ENCODE measurements at regions of chr4 and their contacts with region 1.

Region 1: GRCh38 chr4:40056716-40057585 is at the start of gene N4BP2:
- DNase-seq: peak; percentile 71
- H3K4me3 Mint-ChIP-seq: peak within 1 kb of the TSS; percentile 93
- H3K27ac Mint-ChIP-seq: peak within 1 kb of the TSS; percentile 95
- H3K4me1 Mint-ChIP-seq: peaks cover 30% of the 10 kb centered on the region
- H3K27me3 Mint-ChIP-seq: no peaks in the 10 kb centered on the region
- total RNA-seq, gene N4BP2: 17.5 to 18.8 TPM

Region 2: DNA sequence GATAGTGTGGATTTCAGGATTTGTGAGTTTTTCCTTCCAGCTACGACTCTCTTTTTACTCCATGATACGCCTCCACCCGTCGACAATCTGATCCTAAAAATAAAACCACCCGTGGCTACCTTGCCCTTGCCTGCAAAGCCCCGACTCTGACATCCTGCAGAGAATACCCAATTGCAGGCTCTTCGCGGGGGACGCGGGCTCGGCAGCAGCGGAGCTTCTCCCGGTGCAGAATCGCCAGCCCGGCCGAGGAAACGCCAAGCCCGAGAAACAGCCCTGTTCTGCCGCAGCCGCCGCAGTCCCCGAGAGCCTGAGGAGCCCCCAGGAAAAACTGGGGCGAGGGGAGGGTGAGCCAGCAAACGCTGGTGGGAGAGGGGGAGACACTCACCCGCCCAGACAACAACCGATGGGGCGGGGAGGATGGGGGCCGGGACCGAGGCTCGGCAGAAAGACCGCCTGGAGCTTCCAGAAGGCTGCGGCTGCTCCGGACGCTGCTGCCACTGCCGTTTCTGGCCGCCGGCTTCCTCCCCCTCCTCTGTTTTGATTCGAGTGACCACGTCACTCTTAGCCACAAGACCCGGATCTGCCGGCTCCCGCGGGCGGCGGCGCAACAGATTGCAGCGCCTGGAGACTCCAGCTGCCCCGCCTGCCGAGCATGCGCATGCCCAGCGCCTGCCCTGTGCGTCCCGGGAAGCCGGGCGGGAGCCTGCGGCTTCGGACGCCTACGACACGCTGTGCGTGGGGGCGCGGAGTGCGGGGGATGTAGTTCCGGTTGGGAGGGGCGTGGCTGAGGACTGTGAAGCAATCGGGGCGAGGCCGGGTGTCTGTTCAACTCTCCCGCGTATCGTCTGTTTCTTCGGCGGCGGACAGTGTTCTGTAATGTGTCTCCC is 418.4 kb before region 1 on chr4 and contains the start of gene SMIM14:
- CTCF ChIA-PET with region 1: no interaction called
- intact Hi-C with region 1: loop called (anchors 5 kb)
- DNase-seq: peak; percentile 93
- H3K4me3 Mint-ChIP-seq: peak within 1 kb of the TSS; percentile 85
- H3K27ac Mint-ChIP-seq: peak within 1 kb of the TSS; percentile 69
- H3K4me1 Mint-ChIP-seq: peaks cover 24% of the 10 kb centered on the region
- H3K27me3 Mint-ChIP-seq: no peaks in the 10 kb centered on the region
- total RNA-seq, gene SMIM14: 2.7 to 3.9 TPM

Region 3: DNA sequence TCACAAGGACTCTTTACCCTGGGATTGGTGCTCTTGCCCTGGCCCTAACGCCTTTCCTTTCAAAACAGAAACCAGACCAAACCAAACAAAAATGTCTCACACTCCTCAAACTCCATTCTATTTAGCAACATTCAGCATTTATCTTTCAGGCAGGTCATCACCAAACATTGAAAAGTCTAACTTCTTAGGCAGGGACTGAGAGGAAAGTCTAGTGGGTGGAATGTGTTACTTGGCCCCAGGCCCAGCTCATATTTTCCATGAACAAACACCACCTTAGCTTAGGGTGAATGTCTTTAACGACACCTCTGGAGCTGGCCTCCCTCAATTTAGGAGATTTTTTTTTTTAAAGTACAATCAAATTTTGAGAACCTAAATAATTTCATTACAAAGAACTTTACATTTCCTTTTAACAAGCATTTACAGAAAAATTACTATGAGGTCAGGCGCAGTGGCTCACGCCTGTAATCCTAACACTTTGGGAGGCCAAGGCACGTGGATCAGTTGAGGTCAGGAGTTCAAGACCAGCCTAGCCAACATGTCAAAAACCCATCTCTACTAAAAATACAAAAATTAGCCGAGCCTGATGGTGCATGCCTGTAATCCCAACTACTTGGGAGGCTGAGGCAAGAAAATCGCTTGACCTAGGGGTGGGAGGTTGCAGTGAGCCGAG is 10.5 kb before region 1 on chr4:
- CTCF ChIA-PET with region 1: interaction called, 9 read pairs
- intact Hi-C with region 1: loop called (anchors 1 kb)
- DNase-seq: peak; percentile 60
- H3K4me3 Mint-ChIP-seq: no peak overlapping the region
- H3K27ac Mint-ChIP-seq: peak overlapping the region; percentile 60
- H3K4me1 Mint-ChIP-seq: peaks cover 9% of the 10 kb centered on the region
- H3K27me3 Mint-ChIP-seq: no peaks in the 10 kb centered on the region

Region 4: GRCh38 chr4:40316782-40317635 is 260.1 kb after region 1 on chr4:
- CTCF ChIA-PET with region 1: interaction called, 6 read pairs
- intact Hi-C with region 1: loop called (anchors 2 kb)
- DNase-seq: peak; percentile 71
- H3K4me3 Mint-ChIP-seq: peak overlapping the region; percentile 86
- H3K27ac Mint-ChIP-seq: peak overlapping the region; percentile 100
- H3K4me1 Mint-ChIP-seq: peaks cover 49% of the 10 kb centered on the region
- H3K27me3 Mint-ChIP-seq: no peaks in the 10 kb centered on the region

Region 5: DNA sequence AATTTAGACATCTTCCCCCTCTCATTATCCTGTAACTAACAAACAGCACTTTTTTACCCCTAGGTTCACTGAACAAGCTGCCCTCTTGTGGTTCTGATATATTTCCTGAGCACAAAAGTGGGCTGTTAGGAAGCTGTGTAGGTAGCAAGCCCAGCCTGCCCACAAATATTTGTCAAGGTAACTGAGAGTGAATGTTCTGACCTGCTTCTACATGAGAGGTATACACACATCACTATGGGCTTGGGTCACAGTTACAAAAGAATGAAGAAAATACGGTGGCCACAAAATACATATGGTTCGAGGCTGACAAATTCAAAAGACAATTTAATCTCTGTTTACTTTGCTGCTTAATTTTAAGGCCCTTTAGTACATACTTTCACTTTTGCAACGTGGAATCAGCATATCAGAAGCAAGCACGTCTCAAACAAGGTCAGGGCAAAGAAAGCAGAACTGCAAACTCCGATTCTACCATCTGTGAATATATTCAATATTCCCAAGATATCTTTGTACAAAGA is 494.1 kb after region 1 on chr4:
- CTCF ChIA-PET with region 1: no interaction called
- intact Hi-C with region 1: loop called (anchors 2 kb)
- DNase-seq: peak; percentile 34
- H3K4me3 Mint-ChIP-seq: peak overlapping the region; percentile 60
- H3K27ac Mint-ChIP-seq: peak overlapping the region; percentile 55
- H3K4me1 Mint-ChIP-seq: peaks cover 28% of the 10 kb centered on the region
- H3K27me3 Mint-ChIP-seq: no peaks in the 10 kb centered on the region

Region 6: DNA sequence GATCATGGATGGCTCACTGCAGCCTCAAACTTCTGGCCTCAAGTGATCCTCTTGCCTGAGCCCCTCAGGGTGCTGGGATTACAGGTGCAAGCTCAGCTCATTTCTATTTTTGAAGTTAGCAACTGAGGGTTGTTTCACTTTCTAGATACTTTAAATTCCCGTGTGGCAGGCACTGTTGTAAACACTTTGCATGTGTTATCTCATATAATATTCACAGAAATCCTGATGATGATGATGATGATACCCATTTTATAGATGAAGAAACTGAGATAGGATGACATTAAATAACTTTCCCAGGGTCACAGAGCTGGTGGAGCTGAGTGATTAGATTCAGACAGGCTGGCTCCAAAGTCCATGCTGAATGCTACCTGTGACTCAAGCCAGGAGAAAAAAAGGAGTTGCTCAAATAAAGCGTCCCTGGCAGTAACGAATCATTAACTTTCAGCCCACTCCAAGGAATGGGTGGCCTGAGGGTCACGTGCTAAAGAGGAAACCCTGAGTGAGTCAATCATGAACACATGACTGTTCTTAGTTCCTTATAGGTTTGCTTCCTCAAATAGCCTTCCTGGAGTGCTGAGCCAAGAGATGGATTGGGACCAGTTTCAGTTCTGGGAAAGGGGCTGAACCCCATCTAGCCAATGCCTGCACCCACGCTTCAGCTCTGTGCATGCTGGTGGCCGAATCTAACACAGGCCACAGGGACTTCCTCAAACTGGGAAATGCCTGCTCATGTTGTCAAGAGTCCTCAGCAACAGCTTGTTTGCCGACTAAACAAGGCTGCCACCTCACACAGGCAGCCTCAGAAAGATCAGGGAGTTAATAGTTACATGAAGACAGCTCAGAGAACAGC is 519.9 kb after region 1 on chr4:
- CTCF ChIA-PET with region 1: no interaction called
- intact Hi-C with region 1: no loop called
- DNase-seq: peak; percentile 22
- H3K4me3 Mint-ChIP-seq: no peak overlapping the region
- H3K27ac Mint-ChIP-seq: no peak overlapping the region
- H3K4me1 Mint-ChIP-seq: peaks cover 18% of the 10 kb centered on the region
- H3K27me3 Mint-ChIP-seq: no peaks in the 10 kb centered on the region

Region 7: DNA sequence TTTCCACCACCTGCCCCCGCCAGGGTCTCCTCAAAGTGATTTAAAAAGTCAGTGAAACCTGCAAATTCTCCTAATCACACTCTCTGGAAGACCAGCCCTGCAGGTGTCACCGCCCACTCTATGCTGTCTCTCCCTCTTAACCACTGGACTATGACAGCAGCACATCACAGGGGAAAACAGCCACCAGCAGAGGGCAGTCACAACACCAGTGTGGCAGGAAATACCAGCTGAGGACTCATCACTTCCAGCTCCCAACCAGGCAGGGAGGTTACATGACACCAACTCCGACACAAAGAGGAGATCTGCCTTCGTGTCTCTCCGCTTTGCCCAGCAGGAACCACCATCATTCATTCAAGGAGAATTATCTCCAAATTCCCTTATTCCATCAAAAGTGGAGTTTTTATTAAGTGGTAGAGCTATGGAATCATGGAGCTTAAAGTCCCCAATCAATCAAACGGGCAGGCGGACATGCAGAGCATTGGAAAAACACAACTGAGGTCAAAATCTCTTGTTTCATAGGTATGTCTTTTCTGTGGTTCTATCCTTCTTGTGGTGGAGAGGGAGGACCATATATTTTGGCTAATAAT is 784.1 kb after region 1 on chr4:
- CTCF ChIA-PET with region 1: no interaction called
- intact Hi-C with region 1: loop called (anchors 5 kb)
- DNase-seq: peak; percentile 93
- H3K4me3 Mint-ChIP-seq: no peak overlapping the region
- H3K27ac Mint-ChIP-seq: peak overlapping the region; percentile 47
- H3K4me1 Mint-ChIP-seq: peaks cover 5% of the 10 kb centered on the region
- H3K27me3 Mint-ChIP-seq: no peaks in the 10 kb centered on the region